CD4-positive, alpha-beta memory T cell (primary cell): ENCODE measurements at regions of chr3 and their contacts with region 1.

Region 1: DNA sequence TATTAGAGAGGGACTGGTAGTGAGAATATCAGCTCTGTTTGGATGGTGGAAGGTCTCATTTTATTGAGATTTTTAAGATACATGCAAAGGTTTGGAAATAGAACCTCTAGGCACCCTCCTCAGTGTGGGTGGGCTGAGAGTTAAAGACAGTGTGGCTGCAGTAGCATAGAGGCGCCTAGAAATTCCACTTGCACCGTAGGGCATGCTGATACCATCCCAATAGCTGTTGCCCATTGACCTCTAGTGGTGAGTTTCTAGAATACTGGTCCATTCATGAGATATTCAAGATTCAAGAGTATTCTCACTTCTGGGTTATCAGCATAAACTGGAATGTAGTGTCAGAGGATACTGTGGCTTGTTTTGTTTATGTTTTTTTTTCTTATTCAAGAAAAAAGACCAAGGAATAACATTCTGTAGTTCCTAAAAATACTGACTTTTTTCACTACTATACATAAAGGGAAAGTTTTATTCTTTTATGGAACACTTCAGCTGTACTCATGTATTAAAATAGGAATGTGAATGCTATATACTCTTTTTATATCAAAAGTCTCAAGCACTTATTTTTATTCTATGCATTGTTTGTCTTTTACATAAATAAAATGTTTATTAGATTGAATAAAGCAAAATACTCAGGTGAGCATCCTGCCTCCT is 87.2 kb downstream of the TGFBR2 start:
- DNase-seq: peak; percentile 60 to 70 (median 67)
- H3K4me3 ChIP-seq: no peak overlapping the region
- H3K4me3 Mint-ChIP-seq: no peak overlapping the region
- H3K27ac ChIP-seq: no peak overlapping the region
- H3K27ac Mint-ChIP-seq: peak overlapping the region; percentile 17 to 86 (median 47)
- H3K4me1 ChIP-seq: peaks cover 26% of the 10 kb centered on the region
- H3K4me1 Mint-ChIP-seq: peaks cover 34 to 46% (median 38%) of the 10 kb centered on the region in 4 donors
- H3K27me3 ChIP-seq: no peaks in the 10 kb centered on the region
- H3K27me3 Mint-ChIP-seq: no peaks in the 10 kb centered on the region

Region 2: DNA sequence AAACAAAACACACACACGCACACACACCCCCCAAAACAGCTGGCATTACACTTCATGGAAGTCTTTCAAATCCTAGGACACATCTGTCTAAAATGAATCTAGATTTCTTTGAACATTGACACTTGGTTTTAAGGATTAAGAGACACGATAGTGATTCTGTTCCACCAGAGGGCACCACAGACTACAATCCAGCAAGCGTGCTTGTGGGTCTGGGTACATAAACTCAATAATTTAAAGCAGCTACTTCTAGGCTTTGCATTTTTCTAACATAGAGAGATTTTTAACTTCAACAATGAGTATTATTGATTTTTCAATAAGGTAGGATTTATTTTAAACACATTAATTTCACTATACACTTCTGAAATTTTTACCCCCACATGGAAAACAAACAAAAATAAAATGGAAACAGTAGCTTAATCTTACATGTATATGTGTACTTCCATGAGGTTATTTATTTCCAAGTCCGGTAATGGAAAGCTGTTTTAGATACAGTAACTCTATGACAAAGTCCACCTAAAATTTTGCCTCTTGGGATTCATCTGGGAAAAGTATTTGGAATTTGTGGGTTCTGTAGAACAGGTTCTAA is 651.2 kb before region 1 on chr3:
- CTCF ChIA-PET with region 1: interaction called, 23 read pairs
- POLR2A ChIA-PET with region 1: no interaction called
- intact Hi-C with region 1: loop called (anchors 1 kb)
- DNase-seq: peak; percentile 43 to 55 (median 44)
- H3K4me3 ChIP-seq: no peak overlapping the region
- H3K4me3 Mint-ChIP-seq: no peak overlapping the region
- H3K27ac ChIP-seq: no peak overlapping the region
- H3K27ac Mint-ChIP-seq: no peak overlapping the region
- H3K4me1 ChIP-seq: no peaks in the 10 kb centered on the region
- H3K4me1 Mint-ChIP-seq: no peaks in the 10 kb centered on the region
- H3K27me3 ChIP-seq: peaks cover 2% of the 10 kb centered on the region
- H3K27me3 Mint-ChIP-seq: peaks cover 24 to 26% of the 10 kb centered on the region in 2 donors

Region 3: DNA sequence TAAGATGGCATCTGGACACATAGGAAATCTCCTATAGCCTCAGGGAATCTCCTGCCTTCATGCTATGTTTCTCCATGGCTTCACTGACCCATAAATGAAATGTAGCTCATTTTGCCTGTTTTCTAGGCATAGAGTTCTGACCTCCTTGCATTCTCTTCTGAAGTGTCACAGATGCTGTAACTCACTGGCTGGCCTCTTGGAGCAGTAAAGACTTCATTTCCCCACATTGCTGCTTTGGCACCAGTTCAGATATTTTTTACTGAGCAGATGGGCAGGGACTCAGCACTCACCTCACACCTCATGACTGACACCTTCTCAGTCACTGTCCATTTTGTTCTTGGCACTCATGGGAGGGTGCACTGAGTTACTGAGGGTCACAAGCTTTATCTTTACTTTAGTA is 373.9 kb before region 1 on chr3:
- CTCF ChIA-PET with region 1: interaction called, 74 read pairs
- POLR2A ChIA-PET with region 1: interaction called, 3 read pairs
- intact Hi-C with region 1: loop called (anchors 1 kb)
- DNase-seq: peak; percentile 45 to 54 (median 49)
- H3K4me3 ChIP-seq: no peak overlapping the region
- H3K4me3 Mint-ChIP-seq: no peak overlapping the region
- H3K27ac ChIP-seq: no peak overlapping the region
- H3K27ac Mint-ChIP-seq: peak overlapping the region in 1 of 7 donors; percentile 9
- H3K4me1 ChIP-seq: no peaks in the 10 kb centered on the region
- H3K4me1 Mint-ChIP-seq: peaks cover 3 to 8% (median 5%) of the 10 kb centered on the region in 4 donors
- H3K27me3 ChIP-seq: no peaks in the 10 kb centered on the region
- H3K27me3 Mint-ChIP-seq: no peaks in the 10 kb centered on the region

Region 4: GRCh38 chr3:30623351-30623750 is 70.2 kb before region 1 on chr3:
- CTCF ChIA-PET with region 1: interaction called, 21 read pairs
- POLR2A ChIA-PET with region 1: interaction called, 5 read pairs
- intact Hi-C with region 1: no loop called
- DNase-seq: peak in 1 of 5 donors; percentile 41
- H3K4me3 ChIP-seq: no peak overlapping the region
- H3K4me3 Mint-ChIP-seq: peak overlapping the region; percentile 6 to 86 (median 69)
- H3K27ac ChIP-seq: peak overlapping the region; percentile 40
- H3K27ac Mint-ChIP-seq: peak overlapping the region; percentile 38 to 92 (median 90)
- H3K4me1 ChIP-seq: peaks cover 99% of the 10 kb centered on the region
- H3K4me1 Mint-ChIP-seq: peaks cover 70 to 98% (median 83%) of the 10 kb centered on the region in 4 donors
- H3K27me3 ChIP-seq: no peaks in the 10 kb centered on the region
- H3K27me3 Mint-ChIP-seq: no peaks in the 10 kb centered on the region

Region 5: GRCh38 chr3:30658328-30659052 is 35.1 kb before region 1 on chr3:
- CTCF ChIA-PET with region 1: interaction called, 45 read pairs
- POLR2A ChIA-PET with region 1: interaction called, 18 read pairs
- intact Hi-C with region 1: loop called (anchors 2 kb)
- DNase-seq: peak; percentile 68 to 77 (median 70)
- H3K4me3 ChIP-seq: peak overlapping the region; percentile 3 to 5
- H3K4me3 Mint-ChIP-seq: peak overlapping the region; percentile 62 to 87 (median 72)
- H3K27ac ChIP-seq: peak overlapping the region; percentile 80
- H3K27ac Mint-ChIP-seq: peak overlapping the region; percentile 90 to 98 (median 94)
- H3K4me1 ChIP-seq: peaks cover 100% of the 10 kb centered on the region
- H3K4me1 Mint-ChIP-seq: peaks cover 76 to 99% (median 90%) of the 10 kb centered on the region in 4 donors
- H3K27me3 ChIP-seq: no peaks in the 10 kb centered on the region
- H3K27me3 Mint-ChIP-seq: no peaks in the 10 kb centered on the region